Cardiac septum (tissue), 1 donor: ENCODE measurements at regions of chr17 and their contacts with region 1.

Region 1: GRCh38 chr17:40331743-40332641 is 23.0 kb downstream of the RARA start:
- DNase-seq: peak; percentile 96

Region 2: GRCh38 chr17:40311575-40311974 is 20.4 kb before region 1 on chr17:
- intact Hi-C with region 1: loop called (anchors 1 kb)
- DNase-seq: peak; percentile 83

Region 3: DNA sequence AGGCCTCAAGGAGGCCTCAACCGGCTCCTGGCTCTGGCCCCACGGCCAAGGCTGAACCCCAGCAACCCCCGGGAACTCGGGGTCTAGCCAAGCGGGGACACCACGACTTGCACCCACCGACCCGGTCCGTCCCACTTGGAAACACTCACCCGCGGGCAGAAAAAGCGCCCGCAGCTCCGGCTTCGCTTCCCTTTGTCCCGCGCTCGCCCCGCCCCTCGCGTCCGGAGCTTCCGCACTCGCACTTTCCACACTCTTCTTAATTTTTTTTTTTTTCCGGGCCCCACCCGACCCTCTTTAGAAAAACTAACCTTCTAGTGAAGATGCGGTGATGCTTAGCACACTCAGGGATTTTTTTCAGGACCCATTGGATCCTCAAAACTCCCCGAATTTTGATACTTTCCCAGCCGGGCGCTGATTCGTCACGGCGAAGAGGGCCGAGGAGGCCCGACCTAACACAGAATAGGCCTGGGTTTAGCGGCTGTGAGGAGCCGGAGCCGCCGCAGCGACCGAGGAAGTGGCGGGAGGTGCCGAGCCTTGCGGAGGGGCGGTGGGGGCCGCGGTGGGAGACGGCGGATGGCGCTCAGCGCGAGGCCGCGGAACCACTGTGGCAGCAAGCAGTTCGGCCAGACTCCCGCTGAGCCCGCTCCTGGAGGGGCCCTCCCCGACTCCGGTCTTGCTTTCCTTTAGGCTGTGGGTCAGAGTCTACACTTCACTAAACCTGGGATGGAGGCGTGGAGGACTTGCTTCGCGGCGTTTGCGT is 315.8 kb after region 1 on chr17 and contains the start of gene SMARCE1:
- intact Hi-C with region 1: no loop called
- DNase-seq: peak; percentile 87
- total RNA-seq, gene SMARCE1: 77.7 TPM